Activated naive CD8-positive, alpha-beta T cell treated with anti-CD3 and anti-CD28 coated beads, Interleukin-2, amount 10 ng/mL, durations not matched to agents 7 days and 5 days (primary cell): ENCODE measurements at regions of chr15 and their contacts with region 1.

Region 1: GRCh38 chr15:101294731-101295606 is at the start of gene SNRPA1:
- DNase-seq: peak; percentile 98
- ATAC-seq: peak; percentile 84
- H3K4me3 Mint-ChIP-seq: peak within 1 kb of the TSS; percentile 91
- H3K27ac Mint-ChIP-seq: peak within 1 kb of the TSS; percentile 89
- H3K4me1 Mint-ChIP-seq: peaks cover 40% of the 10 kb centered on the region
- H3K27me3 Mint-ChIP-seq: no peaks in the 10 kb centered on the region
- total RNA-seq, gene SNRPA1: 121 TPM

Region 2: GRCh38 chr15:101320501-101321052 is 25.6 kb after region 1 on chr15:
- POLR2A ChIA-PET with region 1: interaction called, 29 read pairs
- DNase-seq: peak; percentile 71
- ATAC-seq: peak; percentile 99
- H3K4me3 Mint-ChIP-seq: peak overlapping the region; percentile 92
- H3K27ac Mint-ChIP-seq: peak overlapping the region; percentile 98
- H3K4me1 Mint-ChIP-seq: peaks cover 19% of the 10 kb centered on the region
- H3K27me3 Mint-ChIP-seq: no peaks in the 10 kb centered on the region

Region 3: GRCh38 chr15:101368086-101368780 is 73.3 kb after region 1 on chr15:
- POLR2A ChIA-PET with region 1: no interaction called
- DNase-seq: no peak
- ATAC-seq: no peak
- H3K4me3 Mint-ChIP-seq: no peak overlapping the region
- H3K27ac Mint-ChIP-seq: no peak overlapping the region
- H3K4me1 Mint-ChIP-seq: peaks cover 1% of the 10 kb centered on the region
- H3K27me3 Mint-ChIP-seq: peaks cover 9% of the 10 kb centered on the region

Region 4: DNA sequence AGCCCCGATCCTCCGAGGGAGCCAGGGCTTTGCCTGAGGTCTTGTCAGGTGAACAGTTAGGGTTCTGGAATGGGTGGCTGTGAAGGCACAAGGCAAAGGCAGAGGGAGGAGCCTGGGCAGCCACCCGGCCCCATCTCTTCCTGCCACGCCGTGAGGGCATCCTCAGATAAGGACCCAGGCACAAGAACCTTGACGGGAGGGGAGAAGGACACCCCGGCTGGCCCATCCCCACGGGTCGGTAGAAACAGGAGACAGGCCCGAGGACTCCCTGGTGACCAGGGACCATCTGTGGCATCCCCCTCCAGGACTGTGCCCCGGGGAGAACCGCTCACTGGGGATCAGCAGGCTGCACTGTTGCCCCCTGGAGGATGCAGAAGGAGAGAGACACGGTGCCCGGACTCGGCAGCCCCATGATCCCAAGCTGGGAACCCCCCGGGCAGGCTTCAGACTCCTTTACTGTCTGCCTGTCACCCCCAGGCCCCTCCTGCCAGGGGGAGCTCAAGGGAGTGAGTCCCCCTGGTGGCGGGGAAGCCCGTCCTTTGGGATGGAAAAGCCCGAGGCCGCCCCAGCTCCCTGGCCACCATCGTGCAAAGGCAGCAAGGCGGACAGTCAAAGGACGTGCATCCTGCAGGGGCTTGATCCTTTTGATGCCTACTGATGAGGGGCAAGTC is 206.9 kb after region 1 on chr15:
- POLR2A ChIA-PET with region 1: interaction called, 12 read pairs
- DNase-seq: peak; percentile 64
- ATAC-seq: peak; percentile 80
- H3K4me3 Mint-ChIP-seq: peak overlapping the region; percentile 68
- H3K27ac Mint-ChIP-seq: peak overlapping the region; percentile 46
- H3K4me1 Mint-ChIP-seq: peaks cover 24% of the 10 kb centered on the region
- H3K27me3 Mint-ChIP-seq: peaks cover 10% of the 10 kb centered on the region

Region 5: GRCh38 chr15:101641166-101641764 is 346.3 kb after region 1 on chr15:
- POLR2A ChIA-PET with region 1: interaction called, 14 read pairs
- DNase-seq: peak; percentile 68
- ATAC-seq: peak; percentile 70
- H3K4me3 Mint-ChIP-seq: peak overlapping the region; percentile 58
- H3K27ac Mint-ChIP-seq: peak overlapping the region; percentile 74
- H3K4me1 Mint-ChIP-seq: peaks cover 17% of the 10 kb centered on the region
- H3K27me3 Mint-ChIP-seq: no peaks in the 10 kb centered on the region

Region 6: DNA sequence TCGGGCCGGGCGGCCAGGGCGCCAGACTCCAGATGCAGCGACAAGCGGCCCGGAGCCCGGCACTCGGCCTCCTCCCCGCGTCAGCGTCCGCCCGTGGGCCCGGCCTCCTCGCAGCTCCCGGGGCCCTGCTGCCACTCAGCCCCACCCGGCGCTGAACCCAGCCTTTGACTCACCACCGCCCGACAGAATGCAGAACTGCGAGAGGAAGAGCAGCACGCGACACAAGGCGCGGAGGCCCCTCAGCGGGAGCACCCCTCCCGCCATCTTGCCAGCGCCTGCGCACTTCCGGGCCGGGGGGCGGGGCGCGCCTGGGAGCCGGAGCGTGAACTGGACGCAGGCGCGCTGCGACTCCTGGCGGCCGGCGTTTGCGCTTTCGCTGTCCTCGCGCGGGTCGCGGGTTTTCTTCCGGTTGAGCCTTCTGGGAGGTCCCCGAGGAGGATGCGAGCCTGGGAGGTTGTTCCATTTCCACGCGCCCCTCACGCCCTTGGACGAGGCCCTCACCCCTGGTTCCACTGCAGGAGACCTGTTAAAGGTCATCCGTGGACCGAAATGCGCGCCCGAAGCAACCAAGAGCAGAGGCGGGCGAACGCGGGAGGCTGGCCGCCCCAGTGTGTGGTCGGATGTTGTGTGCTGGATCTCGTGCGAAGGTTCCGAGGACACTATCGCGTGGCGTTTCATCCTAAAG is 357.3 kb after region 1 on chr15 and contains the start of gene TM2D3:
- POLR2A ChIA-PET with region 1: interaction called, 15 read pairs
- DNase-seq: peak; percentile 99
- ATAC-seq: peak; percentile 90
- H3K4me3 Mint-ChIP-seq: peak within 1 kb of the TSS; percentile 87
- H3K27ac Mint-ChIP-seq: peak within 1 kb of the TSS; percentile 93
- H3K4me1 Mint-ChIP-seq: peaks cover 25% of the 10 kb centered on the region
- H3K27me3 Mint-ChIP-seq: no peaks in the 10 kb centered on the region
- total RNA-seq, gene TM2D3: 42.7 to 45.8 TPM

Region 7: GRCh38 chr15:101657968-101658784 is 363.2 kb after region 1 on chr15:
- POLR2A ChIA-PET with region 1: interaction called, 15 read pairs
- DNase-seq: no peak
- ATAC-seq: no peak
- H3K4me3 Mint-ChIP-seq: no peak overlapping the region
- H3K27ac Mint-ChIP-seq: no peak overlapping the region
- H3K4me1 Mint-ChIP-seq: peaks cover 6% of the 10 kb centered on the region
- H3K27me3 Mint-ChIP-seq: no peaks in the 10 kb centered on the region